Aorta (tissue), 5 donors: ENCODE measurements at regions of chr6 and their contacts with region 1.

Region 1: DNA sequence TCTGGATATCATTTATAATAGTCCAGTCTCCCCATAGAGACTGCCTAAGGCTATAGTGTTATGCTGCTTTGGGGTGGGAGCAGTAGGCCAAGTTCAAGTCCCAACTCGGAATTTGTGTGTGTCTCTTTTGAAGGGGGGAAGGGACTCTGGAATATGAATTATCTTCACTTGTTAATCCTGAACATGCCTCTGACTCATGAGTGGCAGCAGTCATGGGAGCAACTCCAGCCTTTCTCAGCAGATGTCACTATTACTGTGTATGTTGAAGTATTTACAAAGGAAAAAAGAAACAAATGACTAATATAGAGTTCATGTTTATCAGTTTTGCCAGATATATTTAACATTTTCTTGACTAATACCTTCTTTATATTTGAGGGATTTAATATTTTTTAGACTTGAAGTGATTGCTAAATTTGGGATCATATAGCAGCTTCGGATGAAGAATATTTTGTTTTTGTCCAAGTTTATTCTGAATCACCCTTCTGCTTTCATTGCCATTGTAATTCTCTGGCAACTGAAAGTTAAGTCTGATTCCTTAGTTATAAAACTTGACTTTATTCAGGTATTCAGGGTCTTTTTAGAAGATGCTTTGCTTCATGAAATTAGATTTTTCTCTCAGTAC is 23.4 kb downstream of the FAM217A start:
- DNase-seq: no peak
- ATAC-seq: no peak
- H3K4me3 ChIP-seq: no peak overlapping the region
- H3K27ac ChIP-seq: no peak overlapping the region
- H3K4me1 ChIP-seq: no peaks in the 10 kb centered on the region
- H3K27me3 ChIP-seq: no peaks in the 10 kb centered on the region

Region 2: GRCh38 chr6:4155848-4156466 is 100.4 kb after region 1 on chr6:
- intact Hi-C with region 1: loop called (anchors 5 kb)
- DNase-seq: peak; percentile 74 to 80
- ATAC-seq: peak; percentile 89
- H3K4me3 ChIP-seq: no peak overlapping the region
- H3K27ac ChIP-seq: no peak overlapping the region
- H3K4me1 ChIP-seq: no peaks in the 10 kb centered on the region
- H3K27me3 ChIP-seq: no peaks in the 10 kb centered on the region